Left ventricle myocardium superior (tissue), 1 donor: ENCODE measurements at regions of chr7 and their contacts with region 1.

Region 1: DNA sequence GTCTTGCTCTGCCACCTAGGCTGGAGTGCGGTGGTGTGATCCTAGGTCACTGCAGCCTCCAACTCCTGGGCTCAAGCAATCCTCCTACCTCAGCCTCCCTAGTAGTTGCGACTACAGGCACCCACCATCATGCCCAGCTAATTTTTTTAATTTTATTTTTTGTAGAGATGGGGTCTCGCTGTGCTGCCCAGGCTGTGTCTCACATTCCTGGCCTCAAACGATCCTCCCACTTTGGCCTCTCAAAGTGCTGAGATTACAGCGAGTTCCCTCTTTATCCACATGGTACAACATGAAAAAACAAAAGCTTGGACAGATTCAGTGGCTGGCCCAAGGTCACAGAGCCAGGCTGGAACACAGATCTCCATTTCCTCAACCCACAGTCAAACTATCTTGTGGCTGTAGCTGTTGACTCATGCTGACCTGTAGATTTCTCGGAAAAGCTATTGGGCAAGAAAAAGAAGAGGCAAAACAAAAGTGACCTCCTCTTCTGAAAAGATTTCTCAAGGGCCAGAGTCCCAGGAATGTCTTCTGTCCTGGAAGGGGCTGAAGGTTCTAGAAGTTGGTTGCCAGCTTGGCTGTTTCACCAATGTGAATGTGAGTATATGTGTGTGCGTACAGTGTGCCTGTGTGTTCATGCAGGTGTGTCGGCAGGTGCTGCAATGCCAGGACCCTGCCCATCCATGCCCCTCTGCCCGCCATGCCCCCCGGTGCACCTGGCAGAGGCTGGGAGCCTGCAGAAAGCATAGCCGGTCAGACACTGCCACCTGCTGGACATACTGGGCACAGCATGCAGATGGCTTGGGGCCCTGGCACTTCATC is 28.4 kb downstream of the TMEM130 start:
- DNase-seq: peak; percentile 82
- ATAC-seq: peak; percentile 74

Region 2: GRCh38 chr7:98434095-98434494 is 407.3 kb before region 1 on chr7:
- intact Hi-C with region 1: loop called (anchors 5 kb)
- DNase-seq: no peak
- ATAC-seq: no peak

Region 3: DNA sequence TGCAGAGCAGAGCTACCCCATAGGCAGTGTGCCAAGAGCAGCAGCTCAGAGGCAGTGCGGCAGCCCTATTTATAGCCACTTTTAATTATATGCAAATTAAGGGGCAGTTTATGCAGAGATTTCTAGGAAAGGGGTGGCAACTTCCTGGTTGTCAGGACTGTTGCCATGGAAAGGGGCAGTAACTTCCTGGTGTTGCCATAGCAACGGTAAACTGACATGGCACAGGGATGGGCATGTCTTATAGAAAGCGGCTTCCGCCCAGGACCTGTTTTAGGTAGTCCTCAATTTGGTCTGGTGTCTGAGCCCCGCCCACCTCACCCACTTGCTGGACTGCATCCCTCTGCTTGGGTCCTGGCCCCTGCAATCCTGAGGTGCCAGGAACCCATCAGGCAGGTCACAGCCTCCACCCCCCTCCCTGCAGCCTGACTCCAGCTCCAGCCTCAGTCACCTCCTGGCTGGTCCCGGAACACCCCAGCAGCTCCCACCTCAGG is 87.4 kb before region 1 on chr7:
- intact Hi-C with region 1: loop called (anchors 10 kb)
- DNase-seq: no peak
- ATAC-seq: no peak

Region 4: GRCh38 chr7:99050971-99051370 is 209.6 kb after region 1 on chr7:
- intact Hi-C with region 1: no loop called
- DNase-seq: no peak
- ATAC-seq: no peak

Region 5: GRCh38 chr7:99112097-99112496 is 270.7 kb after region 1 on chr7:
- intact Hi-C with region 1: no loop called
- DNase-seq: no peak
- ATAC-seq: no peak